ENCODE measurements at regions of chr6 and their contacts with region 1.

Region 1: GRCh38 chr6:72622094-72622940 is 453 bp downstream of the KCNQ5 start:
- DNase-seq: no peak
- ATAC-seq: peak; percentile 52
- H3K4me3 ChIP-seq: peak overlapping the region; percentile 100
- H3K27ac ChIP-seq: peak overlapping the region; percentile 89
- H3K4me1 ChIP-seq: peaks cover 27% of the 10 kb centered on the region
- H3K27me3 ChIP-seq: no peaks in the 10 kb centered on the region
- CTCF ChIP-seq: peak; percentile 7 to 34 (median 22); a peak in 3 of 6 replicates
- EP300 ChIP-seq: no peak
- POLR2A ChIP-seq: peak; percentile 59
- RAD21 ChIP-seq: 0 out of 2 replicates have a peak, but pooled peaks have one; percentile 5

Region 2: GRCh38 chr6:72260489-72260888 is 361.8 kb before region 1 on chr6:
- CTCF ChIA-PET with region 1: no interaction called
- POLR2A ChIA-PET with region 1: no interaction called
- RAD21 ChIA-PET with region 1: no interaction called
- SMC1A ChIA-PET with region 1: no interaction called
- in situ Hi-C with region 1: no loop called
- intact Hi-C with region 1: no loop called
- DNase-seq: no peak
- ATAC-seq: no peak
- H3K4me3 ChIP-seq: no peak overlapping the region
- H3K27ac ChIP-seq: no peak overlapping the region
- H3K4me1 ChIP-seq: no peaks in the 10 kb centered on the region
- H3K27me3 ChIP-seq: no peaks in the 10 kb centered on the region
- CTCF ChIP-seq: no peak
- EP300 ChIP-seq: no peak
- POLR2A ChIP-seq: no peak
- RAD21 ChIP-seq: no peak

Region 3: DNA sequence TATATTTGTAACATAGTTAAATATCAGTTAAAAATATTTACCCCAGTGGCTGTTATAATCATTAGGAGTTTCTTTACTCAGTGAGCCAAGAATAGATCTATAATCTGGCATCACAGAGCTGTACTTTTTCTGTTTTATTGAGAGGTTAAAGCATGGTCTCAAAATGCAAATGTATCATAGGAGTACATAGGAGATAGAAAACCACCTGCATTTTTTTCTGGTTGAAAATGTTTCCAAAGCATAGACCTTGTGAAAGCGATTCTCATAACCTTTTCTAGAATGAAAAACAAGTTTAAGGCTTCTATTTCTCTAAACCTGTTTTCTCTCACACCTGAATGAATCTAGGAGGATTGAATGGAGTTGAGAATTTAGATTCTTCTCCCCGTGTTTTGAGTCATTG is 13.9 kb after region 1 on chr6:
- CTCF ChIA-PET with region 1: interaction called, 53 read pairs
- POLR2A ChIA-PET with region 1: interaction called, 23 read pairs
- RAD21 ChIA-PET with region 1: interaction called, 172 read pairs
- SMC1A ChIA-PET with region 1: interaction called, 108 read pairs
- in situ Hi-C with region 1: no loop called
- intact Hi-C with region 1: no loop called
- DNase-seq: peak; percentile 60
- ATAC-seq: peak; percentile 83
- H3K4me3 ChIP-seq: peak overlapping the region; percentile 1; the same call in 1 of the 2 replicates
- H3K27ac ChIP-seq: peak overlapping the region; percentile 21
- H3K4me1 ChIP-seq: peaks cover 14% of the 10 kb centered on the region
- H3K27me3 ChIP-seq: no peaks in the 10 kb centered on the region
- CTCF ChIP-seq: no peak
- EP300 ChIP-seq: peak in 1 of 2 experiments; percentile 43; a peak in 1 of 4 replicates
- POLR2A ChIP-seq: no peak
- RAD21 ChIP-seq: no peak

Region 4: GRCh38 chr6:72649032-72649984 is 27.0 kb after region 1 on chr6:
- CTCF ChIA-PET with region 1: interaction called, 13 read pairs
- POLR2A ChIA-PET with region 1: interaction called, 8 read pairs
- RAD21 ChIA-PET with region 1: interaction called, 24 read pairs
- SMC1A ChIA-PET with region 1: interaction called, 45 read pairs
- in situ Hi-C with region 1: no loop called
- intact Hi-C with region 1: no loop called
- DNase-seq: peak; percentile 58
- ATAC-seq: peak; percentile 71
- H3K4me3 ChIP-seq: peak overlapping the region; percentile 4; the same call in 1 of the 2 replicates
- H3K27ac ChIP-seq: peak overlapping the region; percentile 77
- H3K4me1 ChIP-seq: peaks cover 25% of the 10 kb centered on the region
- H3K27me3 ChIP-seq: no peaks in the 10 kb centered on the region
- CTCF ChIP-seq: no peak
- EP300 ChIP-seq: peak; percentile 66 to 82; a peak in 3 of 4 replicates
- POLR2A ChIP-seq: 0 out of 2 replicates have a peak, but pooled peaks have one; percentile 25
- RAD21 ChIP-seq: no peak

Region 5: GRCh38 chr6:72689107-72689954 is 67.0 kb after region 1 on chr6:
- CTCF ChIA-PET with region 1: interaction called, 40 read pairs
- POLR2A ChIA-PET with region 1: interaction called, 41 read pairs
- RAD21 ChIA-PET with region 1: interaction called, 149 read pairs
- SMC1A ChIA-PET with region 1: interaction called, 245 read pairs
- in situ Hi-C with region 1: loop called (anchors 5 kb)
- intact Hi-C with region 1: loop called (anchors 2 kb)
- DNase-seq: peak; percentile 96
- ATAC-seq: peak; percentile 94
- H3K4me3 ChIP-seq: peak overlapping the region; percentile 63
- H3K27ac ChIP-seq: peak overlapping the region; percentile 100
- H3K4me1 ChIP-seq: peaks cover 16% of the 10 kb centered on the region
- H3K27me3 ChIP-seq: no peaks in the 10 kb centered on the region
- CTCF ChIP-seq: no peak
- EP300 ChIP-seq: peak; percentile 89 to 93; a peak in 3 of 4 replicates
- POLR2A ChIP-seq: no peak; the same call in 1 of the 2 replicates
- RAD21 ChIP-seq: peak; percentile 38

Region 6: DNA sequence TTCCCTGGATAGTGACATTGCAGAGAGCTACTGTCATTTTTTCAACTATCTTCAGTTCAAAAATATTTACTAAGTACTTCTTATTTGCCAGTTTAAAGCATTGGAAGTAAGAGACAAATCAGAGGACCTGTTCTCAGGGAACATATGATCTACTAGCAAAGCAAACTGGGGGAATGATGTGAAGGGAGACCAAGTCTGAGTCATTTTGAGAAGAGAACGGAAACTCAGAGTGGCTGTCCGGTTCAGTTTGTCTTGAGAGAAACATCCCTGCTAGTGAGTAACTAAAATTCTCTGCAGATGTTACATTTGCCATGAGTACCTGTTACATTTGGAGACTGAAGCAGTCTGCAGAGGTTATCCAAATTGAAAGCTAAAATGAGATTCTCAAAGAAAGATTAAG is 117.8 kb after region 1 on chr6:
- CTCF ChIA-PET with region 1: interaction called, 4 read pairs
- POLR2A ChIA-PET with region 1: interaction called, 3 read pairs
- RAD21 ChIA-PET with region 1: interaction called, 10 read pairs
- SMC1A ChIA-PET with region 1: interaction called, 15 read pairs
- in situ Hi-C with region 1: loop called (anchors 5 kb)
- intact Hi-C with region 1: loop called (anchors 5 kb)
- DNase-seq: peak; percentile 90
- ATAC-seq: peak; percentile 94
- H3K4me3 ChIP-seq: peak overlapping the region; percentile 50; the same call in 1 of the 2 replicates
- H3K27ac ChIP-seq: peak overlapping the region; percentile 82
- H3K4me1 ChIP-seq: peaks cover 24% of the 10 kb centered on the region
- H3K27me3 ChIP-seq: no peaks in the 10 kb centered on the region
- CTCF ChIP-seq: no peak
- EP300 ChIP-seq: peak; percentile 79 to 94
- POLR2A ChIP-seq: no peak
- RAD21 ChIP-seq: 0 out of 2 replicates have a peak, but pooled peaks have one; percentile 14

Region 7: DNA sequence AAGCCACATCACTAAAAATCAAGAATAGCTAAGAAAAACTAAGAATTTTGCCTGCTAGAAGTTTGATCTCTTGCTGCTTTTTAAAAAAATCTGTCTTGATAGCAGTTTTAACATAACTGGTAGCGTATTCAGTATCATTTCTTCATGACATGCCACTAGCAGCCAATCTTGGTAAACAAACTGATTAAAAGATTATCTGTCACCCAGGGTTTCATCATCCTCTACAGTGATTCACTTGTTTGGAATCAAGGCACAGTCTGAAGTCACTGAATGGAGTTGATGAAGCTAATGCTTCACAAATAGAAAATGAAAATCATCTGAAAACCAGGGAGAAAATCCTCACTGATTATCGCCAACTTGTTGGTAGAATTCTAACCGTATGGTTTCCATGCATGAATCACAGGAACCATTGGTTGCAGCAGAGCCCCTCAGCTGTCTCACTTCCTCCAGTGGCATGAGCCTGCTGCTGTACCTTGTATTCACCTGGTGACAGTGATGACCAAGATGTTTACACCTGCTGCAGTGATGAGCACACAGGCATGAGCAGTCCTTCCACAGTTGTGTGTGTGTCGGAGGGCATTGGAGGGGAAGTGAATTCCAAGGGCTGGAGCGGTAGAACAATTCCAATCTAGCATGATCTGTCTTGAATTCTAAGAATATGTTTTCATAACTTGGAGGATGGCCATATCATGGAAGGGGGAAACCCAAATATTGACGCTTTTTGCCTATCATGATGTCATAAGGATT is 328.0 kb after region 1 on chr6:
- CTCF ChIA-PET with region 1: interaction called, 3 read pairs
- POLR2A ChIA-PET with region 1: no interaction called
- RAD21 ChIA-PET with region 1: interaction called, 9 read pairs
- SMC1A ChIA-PET with region 1: interaction called, 3 read pairs
- in situ Hi-C with region 1: no loop called
- intact Hi-C with region 1: loop called (anchors 10 kb)
- DNase-seq: no peak
- ATAC-seq: no peak
- H3K4me3 ChIP-seq: no peak overlapping the region
- H3K27ac ChIP-seq: no peak overlapping the region
- H3K4me1 ChIP-seq: no peaks in the 10 kb centered on the region
- H3K27me3 ChIP-seq: no peaks in the 10 kb centered on the region
- CTCF ChIP-seq: no peak
- EP300 ChIP-seq: no peak
- POLR2A ChIP-seq: no peak
- RAD21 ChIP-seq: no peak

Region 8: DNA sequence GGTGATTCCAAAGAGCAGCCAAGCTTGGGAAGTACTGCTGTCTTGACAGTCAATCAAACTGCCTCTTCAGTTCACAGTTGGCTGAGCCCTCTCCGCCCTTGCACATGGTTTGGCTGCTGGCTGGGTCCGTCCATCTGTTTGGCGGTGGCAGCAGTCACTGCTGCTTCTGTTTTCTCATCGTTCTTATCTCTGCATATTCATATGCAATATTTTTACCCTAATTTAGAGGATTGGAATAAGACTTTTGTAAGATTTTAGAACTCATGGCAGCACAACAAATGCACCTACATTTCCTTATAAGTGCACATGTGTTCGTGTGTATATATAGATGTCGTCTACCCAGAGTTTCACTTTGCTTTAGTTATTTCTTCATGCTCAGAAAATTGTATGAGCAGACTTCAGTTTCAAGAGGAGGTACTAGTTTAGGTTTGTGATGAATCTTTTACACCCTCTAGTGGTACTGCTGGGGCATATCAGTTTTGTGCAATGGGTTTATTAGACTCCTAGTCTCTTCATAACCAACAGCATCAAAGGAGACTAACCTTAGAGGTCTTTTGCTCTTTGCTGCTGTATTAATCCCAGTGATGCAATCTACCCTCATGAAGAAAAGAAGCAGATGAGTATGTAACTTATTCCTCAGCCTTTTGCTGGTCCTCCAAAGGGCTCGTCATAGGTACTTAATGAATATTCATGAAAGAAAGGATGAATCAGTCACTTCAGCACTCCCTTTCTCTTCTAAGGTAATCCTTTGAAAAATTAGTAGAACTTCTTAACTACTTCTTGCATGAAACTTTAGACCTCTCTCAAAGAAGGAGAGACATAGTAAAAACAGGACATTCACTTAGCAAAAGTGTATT is 558.7 kb after region 1 on chr6:
- CTCF ChIA-PET with region 1: interaction called, 25 read pairs
- POLR2A ChIA-PET with region 1: no interaction called
- RAD21 ChIA-PET with region 1: interaction called, 29 read pairs
- SMC1A ChIA-PET with region 1: interaction called, 27 read pairs
- in situ Hi-C with region 1: loop called (anchors 5 kb)
- intact Hi-C with region 1: loop called (anchors 2 kb)
- DNase-seq: peak; percentile 53
- ATAC-seq: peak; percentile 94
- H3K4me3 ChIP-seq: peak overlapping the region; percentile 25; the same call in 1 of the 2 replicates
- H3K27ac ChIP-seq: no peak overlapping the region
- H3K4me1 ChIP-seq: peaks cover 23% of the 10 kb centered on the region
- H3K27me3 ChIP-seq: no peaks in the 10 kb centered on the region
- CTCF ChIP-seq: peak; percentile 79 to 91 (median 85)
- EP300 ChIP-seq: no peak
- POLR2A ChIP-seq: no peak
- RAD21 ChIP-seq: peak; percentile 97

Measured in GM12878 (cell line).